ENCODE measurements at regions of chr11 and their contacts with region 1.

Region 1: GRCh38 chr11:125075849-125076317 is 12.8 kb downstream of the SLC37A2 start:
- DNase-seq: peak; percentile 77
- H3K4me3 Mint-ChIP-seq: no peak overlapping the region
- H3K27ac Mint-ChIP-seq: peak overlapping the region; percentile 84
- H3K4me1 Mint-ChIP-seq: peaks cover 42% of the 10 kb centered on the region
- H3K27me3 Mint-ChIP-seq: no peaks in the 10 kb centered on the region
- CTCF ChIP-seq: no peak

Region 2: GRCh38 chr11:124961972-124962609 is 113.8 kb before region 1 on chr11:
- CTCF ChIA-PET with region 1: interaction called, 4 read pairs
- POLR2A ChIA-PET with region 1: interaction called, 3 read pairs
- intact Hi-C with region 1: loop called (anchors 5 kb)
- DNase-seq: peak; percentile 85
- H3K4me3 Mint-ChIP-seq: no peak overlapping the region
- H3K27ac Mint-ChIP-seq: no peak overlapping the region
- H3K4me1 Mint-ChIP-seq: no peaks in the 10 kb centered on the region
- H3K27me3 Mint-ChIP-seq: no peaks in the 10 kb centered on the region
- CTCF ChIP-seq: peak; percentile 69

Region 3: DNA sequence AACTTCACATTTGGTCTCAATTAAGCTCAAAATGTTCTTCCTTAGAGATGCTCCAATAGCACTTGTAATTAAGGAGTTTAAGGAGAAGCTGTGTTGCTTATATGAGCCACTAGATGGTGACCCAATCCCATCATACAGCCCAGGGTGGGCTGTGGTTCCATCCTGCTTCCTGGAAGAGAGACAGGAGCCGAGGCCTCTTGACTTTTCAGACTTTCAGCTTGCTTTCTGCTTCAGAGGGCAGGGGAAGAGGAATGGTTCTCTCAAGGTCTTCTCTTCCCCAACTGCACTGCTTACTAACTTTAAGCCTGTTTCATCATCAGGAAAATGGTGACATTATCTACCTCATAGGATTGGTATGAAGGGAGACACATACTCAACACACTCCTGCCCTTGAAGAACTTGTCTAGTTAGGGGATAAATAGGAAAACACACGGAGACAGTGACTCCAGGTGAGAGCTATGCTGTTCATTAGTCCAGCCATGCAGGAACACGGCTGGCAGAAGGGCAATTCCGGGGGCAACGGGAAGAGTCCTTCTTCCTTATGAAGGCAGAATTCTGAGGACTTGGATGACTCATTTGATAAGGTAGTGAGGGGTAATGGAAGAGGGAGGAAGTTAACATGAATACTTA is 15.5 kb after region 1 on chr11:
- CTCF ChIA-PET with region 1: interaction called, 10 read pairs
- POLR2A ChIA-PET with region 1: interaction called, 3 read pairs
- intact Hi-C with region 1: no loop called
- DNase-seq: peak; percentile 40
- H3K4me3 Mint-ChIP-seq: no peak overlapping the region
- H3K27ac Mint-ChIP-seq: peak overlapping the region; percentile 13
- H3K4me1 Mint-ChIP-seq: peaks cover 13% of the 10 kb centered on the region
- H3K27me3 Mint-ChIP-seq: no peaks in the 10 kb centered on the region
- CTCF ChIP-seq: peak; percentile 42

Measured in MCF 10A (cell line).